ENCODE measurements at regions of chr9 and their contacts with region 1.

Region 1: DNA sequence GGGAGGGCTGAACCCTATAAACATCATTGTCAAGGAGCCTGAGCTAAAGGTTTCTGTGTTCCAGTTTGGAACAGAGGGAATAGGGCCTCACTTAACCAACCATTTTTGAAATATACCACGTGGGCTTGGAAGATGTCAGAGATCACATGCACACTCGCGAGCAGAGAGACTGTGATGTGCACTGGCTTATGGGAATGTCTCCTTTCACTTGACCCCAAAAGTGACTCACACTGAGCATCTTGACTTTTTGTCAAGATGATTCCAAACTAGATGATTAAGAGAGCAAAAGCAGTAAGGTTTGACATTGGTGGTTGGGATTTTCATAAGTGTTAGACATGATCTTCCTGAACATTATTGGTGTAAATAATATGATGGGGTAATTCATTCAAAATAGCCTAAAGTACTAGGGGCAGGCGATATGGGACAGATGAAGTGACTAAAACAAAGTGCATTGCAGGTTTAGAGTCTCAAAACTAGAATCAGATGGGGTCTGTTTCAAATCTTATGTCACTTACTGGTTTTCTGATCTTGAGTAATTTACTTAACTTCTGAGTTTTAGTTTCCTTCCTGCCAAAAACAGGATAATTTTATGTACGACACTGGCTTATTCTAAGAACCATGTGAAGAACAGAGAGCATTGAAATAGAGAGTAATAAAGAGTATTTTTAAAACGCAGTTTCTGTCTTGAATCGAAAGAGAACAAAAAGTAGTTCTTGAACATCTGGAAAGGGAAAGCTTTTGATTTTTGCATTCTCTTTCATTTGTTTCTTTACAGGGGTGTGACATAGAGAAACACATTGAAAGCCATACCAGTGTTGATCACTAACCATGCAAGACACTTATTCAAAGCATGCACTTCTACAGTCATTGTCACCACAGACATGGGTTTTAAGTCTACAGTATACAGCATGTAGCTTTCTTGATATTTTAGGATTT is 383.0 kb downstream of the DIRAS2 start:
- DNase-seq: no peak

Region 2: GRCh38 chr9:88339317-88339716 is 1920.3 kb before region 1 on chr9:
- intact Hi-C with region 1: no loop called
- DNase-seq: no peak

Region 3: DNA sequence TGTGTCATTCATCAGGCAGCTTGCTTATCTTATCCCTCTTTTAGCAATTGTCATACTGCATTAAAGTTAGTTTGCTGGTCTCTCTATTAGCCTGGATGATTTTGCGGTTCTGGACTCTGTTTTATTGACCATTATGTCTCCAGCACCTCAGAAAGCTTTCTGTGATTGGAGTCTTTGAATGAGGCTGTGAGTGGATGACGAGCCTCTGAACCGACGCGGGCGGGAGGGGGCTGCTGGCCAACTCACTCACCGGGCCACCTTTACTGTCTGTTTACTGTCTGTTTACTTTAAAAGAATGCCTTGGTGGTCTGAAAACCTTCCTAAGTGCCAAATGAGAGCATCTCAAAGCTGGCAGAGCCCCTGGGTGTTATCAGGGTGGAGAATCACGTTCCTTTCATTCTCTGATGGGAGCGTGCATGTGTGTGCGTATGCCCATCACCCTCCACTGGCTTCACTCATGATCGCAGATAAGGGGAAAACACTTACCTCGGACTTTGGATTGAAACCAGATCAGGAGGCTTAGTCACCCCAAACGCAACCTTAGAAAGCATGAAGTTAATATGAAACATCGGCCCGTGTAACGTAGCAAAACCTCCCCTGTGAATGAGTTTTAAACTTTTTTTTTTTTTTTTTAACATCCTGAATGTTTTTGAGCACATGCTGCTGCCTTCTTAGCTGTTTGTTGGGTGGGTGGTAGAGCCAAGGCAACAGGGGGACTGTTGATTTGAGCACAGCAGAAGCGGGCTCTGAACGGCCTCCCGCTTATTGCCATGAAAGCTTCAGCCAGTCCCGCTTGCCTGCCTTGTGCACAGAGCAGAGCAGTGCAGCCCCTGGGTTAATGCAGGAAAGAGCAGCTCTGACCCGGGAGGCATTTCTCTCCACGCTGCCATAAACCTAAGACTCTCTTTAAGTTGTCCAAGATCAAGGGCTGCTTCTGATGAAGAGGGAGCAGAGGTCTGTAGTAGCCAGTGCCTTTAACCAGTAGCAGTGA is 481.2 kb before region 1 on chr9:
- intact Hi-C with region 1: loop called in 1 of 2 experiments (anchors 5 kb)
- DNase-seq: peak; percentile 58